ENCODE measurements at regions of chr4 and their contacts with region 1.

Region 1: GRCh38 chr4:107757864-107758476 is 37.9 kb upstream of the PAPSS1 start:
- DNase-seq: no peak

Region 2: GRCh38 chr4:107693132-107693531 is 64.8 kb before region 1 on chr4:
- intact Hi-C with region 1: no loop called
- DNase-seq: no peak

Region 3: GRCh38 chr4:107913281-107913899 is 155.4 kb after region 1 on chr4:
- intact Hi-C with region 1: loop called (anchors 2 to 5 kb)
- DNase-seq: no peak

Measured in posterior vena cava (tissue), 2 donors.